ENCODE measurements at regions of chr7 and their contacts with region 1.

Region 1: DNA sequence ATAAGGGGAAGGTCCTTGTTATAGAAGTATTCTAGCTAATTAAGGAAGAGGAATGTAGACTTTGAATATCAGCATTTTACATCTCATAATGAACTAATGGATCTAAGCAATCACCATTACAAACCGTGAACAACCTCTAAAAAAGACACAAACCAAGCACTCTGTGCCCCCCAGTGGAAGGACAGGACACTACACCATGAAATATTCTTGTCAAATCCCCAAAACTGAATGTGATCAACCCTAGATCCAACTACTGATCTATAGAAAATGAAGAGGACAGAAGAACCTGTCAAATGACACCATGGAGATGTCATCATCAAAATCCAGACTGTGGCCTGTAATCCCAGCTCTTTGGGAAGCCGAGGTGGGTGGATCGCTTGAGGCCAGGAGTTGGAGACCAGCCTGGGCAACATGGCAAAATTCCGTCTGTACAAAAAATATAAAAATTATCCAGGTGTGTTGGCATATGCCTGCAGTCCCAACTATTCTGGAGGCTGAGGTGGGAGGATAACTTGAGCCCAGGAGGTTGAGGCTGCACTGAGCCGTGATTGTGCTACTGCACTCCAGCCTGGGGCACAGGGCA is 111.3 kb upstream of the CARD11 start:
- DNase-seq: peak; percentile 56
- H3K4me3 ChIP-seq: no peak overlapping the region
- H3K27ac ChIP-seq: no peak overlapping the region
- H3K4me1 ChIP-seq: no peaks in the 10 kb centered on the region
- H3K27me3 ChIP-seq: peaks cover 7% of the 10 kb centered on the region; the same call in 1 of the 2 replicates

Region 2: DNA sequence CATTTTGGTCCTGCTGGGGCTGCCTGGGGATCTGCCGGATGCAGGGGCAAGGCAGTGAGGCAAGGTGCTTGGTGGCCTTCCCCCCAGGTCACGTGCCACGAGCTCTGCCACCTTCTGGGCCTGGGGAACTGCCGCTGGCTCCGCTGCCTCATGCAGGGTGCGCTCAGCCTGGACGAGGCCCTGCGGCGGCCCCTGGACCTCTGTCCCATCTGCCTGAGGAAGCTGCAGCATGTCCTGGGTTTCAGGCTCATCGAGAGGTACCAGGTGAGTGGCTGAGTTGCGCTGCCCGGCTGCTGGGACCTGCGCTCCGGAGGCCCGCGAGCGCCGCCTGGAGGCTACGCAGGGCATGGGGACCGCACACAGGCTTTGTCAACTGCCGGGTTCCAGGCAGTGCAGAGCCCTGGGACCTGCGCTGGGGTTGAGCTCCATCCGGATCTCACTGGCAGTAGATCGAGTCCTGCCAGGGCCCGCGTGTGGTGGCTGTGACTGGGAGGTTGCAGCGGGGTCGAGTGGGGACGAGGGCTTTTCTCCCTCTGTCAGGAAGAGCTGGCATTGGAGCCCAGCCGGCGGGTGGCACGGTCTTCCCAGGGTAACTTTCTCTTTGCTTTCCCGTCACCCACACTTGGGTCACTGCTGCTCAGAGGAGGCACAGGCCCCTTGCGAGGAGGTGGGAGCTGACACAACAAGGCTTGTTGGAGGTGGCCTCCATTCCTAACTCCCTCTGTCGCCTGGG is 445.3 kb before region 1 on chr7:
- in situ Hi-C with region 1: loop called (anchors 25 kb)
- DNase-seq: peak; percentile 73
- H3K4me3 ChIP-seq: 0 out of 2 replicates have a peak overlapping the region, but pooled peaks have one; percentile 21
- H3K27ac ChIP-seq: no peak overlapping the region
- H3K4me1 ChIP-seq: no peaks in the 10 kb centered on the region
- H3K27me3 ChIP-seq: no peaks in the 10 kb centered on the region

Region 3: DNA sequence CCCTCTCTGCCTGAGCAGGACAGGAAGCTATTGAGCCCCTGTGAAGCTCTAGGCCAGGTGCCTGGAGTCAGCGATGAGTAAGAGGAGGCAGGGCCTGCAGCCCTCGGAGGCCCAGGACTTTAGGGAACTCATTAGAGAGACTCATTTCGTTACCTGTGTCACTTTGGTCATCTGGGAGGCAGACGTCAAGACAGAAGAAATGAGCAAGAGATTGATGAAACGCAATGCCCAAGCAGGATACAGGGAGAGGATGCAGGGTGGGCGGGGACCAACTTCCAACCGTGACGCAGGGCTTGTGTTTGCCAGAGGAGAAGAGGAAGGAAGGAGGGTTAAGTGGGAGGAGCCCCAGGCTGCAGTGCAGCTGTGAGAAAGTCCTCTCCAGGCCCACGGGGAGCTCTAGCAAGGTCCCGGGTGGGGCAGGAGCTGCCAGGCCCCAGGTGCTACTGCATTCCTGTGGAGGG is 284.5 kb before region 1 on chr7:
- in situ Hi-C with region 1: loop called (anchors 10 kb)
- DNase-seq: peak; percentile 69
- H3K4me3 ChIP-seq: no peak overlapping the region
- H3K27ac ChIP-seq: no peak overlapping the region
- H3K4me1 ChIP-seq: no peaks in the 10 kb centered on the region
- H3K27me3 ChIP-seq: no peaks in the 10 kb centered on the region

Region 4: DNA sequence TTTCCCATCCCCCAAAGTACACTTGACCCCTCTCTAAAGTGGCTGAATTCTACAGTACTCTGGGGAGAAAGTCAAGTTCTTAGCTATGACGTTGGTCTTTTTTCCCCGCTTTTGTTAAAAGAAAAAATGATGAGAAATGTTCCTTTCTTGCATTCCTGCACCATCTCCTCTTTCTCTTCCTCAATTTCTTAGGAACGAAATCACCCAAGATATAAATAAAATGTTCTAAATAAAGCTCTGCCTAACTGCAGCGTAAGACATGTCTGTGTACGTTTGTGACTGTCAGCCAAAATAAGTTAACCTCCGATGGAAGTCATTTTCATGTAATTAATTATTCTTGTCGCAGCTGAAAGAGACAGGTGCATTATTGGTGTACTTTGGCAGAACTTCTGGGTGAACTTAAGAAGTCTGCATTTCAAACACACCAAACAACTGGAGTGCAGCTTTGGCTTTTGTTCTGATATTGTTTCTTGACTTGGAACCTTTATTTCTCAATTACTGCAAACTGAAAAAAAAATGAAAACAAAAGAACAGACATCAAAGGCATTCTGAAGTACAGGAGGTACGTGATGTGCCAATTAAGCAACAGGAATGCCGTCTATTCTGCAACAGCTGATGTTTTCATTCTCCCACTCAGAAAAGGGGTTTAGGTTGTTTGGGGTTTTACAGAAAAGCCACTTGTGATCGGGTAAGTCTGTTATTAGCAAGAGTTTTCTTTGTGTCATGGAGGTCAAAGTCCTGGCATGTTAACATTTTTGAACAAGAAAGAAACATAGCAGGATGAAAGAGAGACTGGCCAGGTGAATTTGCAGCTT is 63.6 kb after region 1 on chr7:
- in situ Hi-C with region 1: no loop called
- DNase-seq: no peak
- H3K4me3 ChIP-seq: no peak overlapping the region
- H3K27ac ChIP-seq: no peak overlapping the region
- H3K4me1 ChIP-seq: no peaks in the 10 kb centered on the region
- H3K27me3 ChIP-seq: no peaks in the 10 kb centered on the region